ENCODE measurements at regions of chr21 and their contacts with region 1.

Region 1: GRCh38 chr21:36260030-36260787 is 59.8 kb upstream of the MORC3 start:
- DNase-seq: no peak
- ATAC-seq: peak; percentile 48
- H3K4me3 Mint-ChIP-seq: peak overlapping the region; percentile 82
- H3K27ac Mint-ChIP-seq: peak overlapping the region; percentile 96
- H3K4me1 Mint-ChIP-seq: peaks cover 91% of the 10 kb centered on the region
- H3K27me3 Mint-ChIP-seq: no peaks in the 10 kb centered on the region
- CTCF ChIP-seq: no peak

Region 2: DNA sequence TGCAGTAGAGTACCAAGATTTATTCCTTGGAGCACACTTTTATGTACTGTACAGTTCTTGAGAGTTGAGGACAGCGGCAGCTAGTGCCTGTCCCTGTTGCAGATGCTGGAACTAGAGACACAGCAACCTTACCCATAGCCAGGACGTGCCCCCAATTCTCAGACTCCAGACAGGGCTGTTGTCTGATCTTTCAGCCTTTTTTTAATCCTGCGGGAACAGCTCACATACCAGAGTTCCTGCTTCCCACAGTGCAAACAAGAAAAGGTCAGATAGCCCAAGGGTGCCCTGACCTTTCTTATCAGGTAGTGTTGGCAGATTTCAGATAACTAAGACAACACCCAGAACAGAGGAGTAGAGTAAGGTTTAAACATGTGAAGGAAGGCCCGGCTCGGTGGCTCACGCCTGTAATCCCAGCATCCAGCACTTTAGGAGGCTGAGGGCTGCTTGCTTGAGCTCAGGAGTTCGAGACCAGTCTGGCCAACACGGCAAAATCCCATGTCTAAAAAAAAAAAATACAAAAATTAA is 25.1 kb before region 1 on chr21:
- CTCF ChIA-PET with region 1: no interaction called
- POLR2A ChIA-PET with region 1: interaction called, 30 read pairs
- intact Hi-C with region 1: no loop called
- DNase-seq: no peak
- ATAC-seq: no peak
- H3K4me3 Mint-ChIP-seq: no peak overlapping the region
- H3K27ac Mint-ChIP-seq: no peak overlapping the region
- H3K4me1 Mint-ChIP-seq: peaks cover 33% of the 10 kb centered on the region
- H3K27me3 Mint-ChIP-seq: no peaks in the 10 kb centered on the region
- CTCF ChIP-seq: no peak

Region 3: DNA sequence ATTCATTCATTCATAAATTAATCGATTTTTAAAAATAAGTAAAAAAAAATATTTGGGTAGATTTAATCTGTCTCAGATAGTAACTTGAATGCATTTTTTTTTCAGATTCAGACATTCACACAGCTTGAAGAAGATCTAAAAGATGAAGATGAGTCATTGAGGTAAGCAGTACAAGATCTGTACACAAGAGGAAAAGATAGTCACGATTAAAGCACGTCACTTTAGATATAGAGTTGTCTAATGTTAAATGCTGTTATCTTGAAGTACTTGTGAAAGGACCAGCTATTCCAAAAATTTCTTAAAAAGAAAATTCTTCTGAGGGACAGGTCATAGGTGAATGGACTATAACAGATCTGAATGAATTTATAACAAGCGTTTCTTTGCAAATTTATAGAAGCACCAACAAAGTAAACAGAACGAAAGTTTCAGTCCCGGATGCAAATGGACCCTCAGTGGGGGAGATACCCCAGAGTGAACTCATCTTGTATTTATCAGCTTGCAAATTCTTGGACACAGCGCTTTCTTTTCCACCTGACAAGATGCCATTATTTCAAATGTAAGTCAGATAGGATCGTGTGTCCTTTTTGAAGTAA is 28.5 kb after region 1 on chr21:
- CTCF ChIA-PET with region 1: interaction called, 7 read pairs
- POLR2A ChIA-PET with region 1: interaction called, 54 read pairs
- intact Hi-C with region 1: loop called (anchors 1 kb)
- DNase-seq: no peak
- ATAC-seq: peak; percentile 51
- H3K4me3 Mint-ChIP-seq: peak overlapping the region; percentile 62
- H3K27ac Mint-ChIP-seq: peak overlapping the region; percentile 91
- H3K4me1 Mint-ChIP-seq: peaks cover 21% of the 10 kb centered on the region
- H3K27me3 Mint-ChIP-seq: no peaks in the 10 kb centered on the region
- CTCF ChIP-seq: no peak

Region 4: GRCh38 chr21:36310016-36310415 is 49.8 kb after region 1 on chr21:
- CTCF ChIA-PET with region 1: no interaction called
- POLR2A ChIA-PET with region 1: interaction called, 14 read pairs
- intact Hi-C with region 1: loop called (anchors 1 kb)
- DNase-seq: no peak
- ATAC-seq: peak; percentile 93
- H3K4me3 Mint-ChIP-seq: peak overlapping the region; percentile 51
- H3K27ac Mint-ChIP-seq: peak overlapping the region; percentile 86
- H3K4me1 Mint-ChIP-seq: peaks cover 34% of the 10 kb centered on the region
- H3K27me3 Mint-ChIP-seq: no peaks in the 10 kb centered on the region
- CTCF ChIP-seq: no peak

Region 5: DNA sequence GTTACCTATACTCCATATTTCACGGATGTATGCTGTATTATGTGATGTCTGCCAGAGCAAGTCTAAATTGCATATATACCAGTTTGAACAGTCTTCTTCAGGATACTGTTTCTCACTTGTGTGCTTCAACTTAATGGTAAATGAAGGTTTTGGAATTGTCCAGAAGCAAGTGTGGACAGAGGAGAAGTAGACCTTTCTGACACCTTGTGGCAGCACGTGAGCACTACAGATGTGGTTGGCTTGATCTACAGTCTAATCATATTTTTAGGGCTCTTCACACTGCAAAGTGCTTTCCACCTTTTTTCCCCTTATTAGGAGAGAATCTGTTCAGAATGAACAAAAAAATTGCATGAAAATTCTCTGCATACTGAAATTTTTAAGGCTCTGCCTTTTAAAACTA is 70.7 kb after region 1 on chr21:
- CTCF ChIA-PET with region 1: interaction called, 4 read pairs
- POLR2A ChIA-PET with region 1: interaction called, 3 read pairs
- intact Hi-C with region 1: loop called (anchors 1 kb)
- DNase-seq: no peak
- ATAC-seq: peak; percentile 91
- H3K4me3 Mint-ChIP-seq: no peak overlapping the region
- H3K27ac Mint-ChIP-seq: peak overlapping the region; percentile 79
- H3K4me1 Mint-ChIP-seq: peaks cover 36% of the 10 kb centered on the region
- H3K27me3 Mint-ChIP-seq: no peaks in the 10 kb centered on the region
- CTCF ChIP-seq: peak; percentile 67